GM10248 (cell line): ENCODE measurements at regions of chr1 and their contacts with region 1.

Region 1: DNA sequence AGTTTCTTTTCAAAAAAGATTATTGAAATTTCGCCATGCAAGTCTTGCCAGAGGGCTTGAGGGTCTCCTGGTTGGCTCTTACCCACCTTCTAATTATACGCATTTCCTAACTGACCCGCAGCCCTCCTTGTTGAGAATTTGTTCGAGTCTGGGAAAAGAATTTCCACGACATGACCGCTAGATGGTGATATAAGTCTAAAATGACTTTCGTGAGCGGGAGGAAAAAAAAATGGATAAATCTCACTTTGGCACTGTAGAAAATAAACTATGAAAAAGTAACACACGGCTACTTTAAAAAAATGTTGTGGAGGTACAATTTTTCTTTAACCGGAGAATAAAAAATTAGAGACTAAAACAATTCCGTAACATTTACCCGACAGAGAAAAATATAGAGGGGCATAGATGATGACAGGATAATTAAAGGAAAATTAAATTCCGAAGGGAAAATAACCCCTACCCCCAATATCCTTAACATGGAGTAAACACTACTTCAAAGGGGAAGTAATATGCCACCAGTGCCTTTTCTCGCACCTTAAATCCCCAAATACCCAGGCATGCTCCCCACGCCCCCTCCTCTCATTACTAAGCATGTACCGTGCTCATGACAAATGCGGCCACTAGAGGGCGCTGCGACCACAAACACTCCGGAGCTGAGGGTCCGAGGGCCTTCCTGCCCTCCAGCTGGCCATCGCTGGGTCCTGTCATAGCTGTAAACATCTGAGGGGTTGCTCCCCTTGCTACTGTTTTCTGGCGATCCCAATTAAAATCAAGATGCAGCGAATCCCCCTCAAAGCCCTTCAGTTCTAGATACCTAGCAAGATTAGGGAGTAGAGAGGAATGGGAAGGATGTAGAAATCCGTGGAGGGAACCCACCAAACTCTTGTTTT is 266.9 kb downstream of the ASTN1 start:
- DNase-seq: peak; percentile 52
- CTCF ChIP-seq: peak; percentile 71

Region 2: GRCh38 chr1:176880954-176881595 is 16.5 kb before region 1 on chr1:
- CTCF ChIA-PET with region 1: interaction called, 11 read pairs
- POLR2A ChIA-PET with region 1: no interaction called
- DNase-seq: peak; percentile 63
- CTCF ChIP-seq: peak; percentile 80

Region 3: DNA sequence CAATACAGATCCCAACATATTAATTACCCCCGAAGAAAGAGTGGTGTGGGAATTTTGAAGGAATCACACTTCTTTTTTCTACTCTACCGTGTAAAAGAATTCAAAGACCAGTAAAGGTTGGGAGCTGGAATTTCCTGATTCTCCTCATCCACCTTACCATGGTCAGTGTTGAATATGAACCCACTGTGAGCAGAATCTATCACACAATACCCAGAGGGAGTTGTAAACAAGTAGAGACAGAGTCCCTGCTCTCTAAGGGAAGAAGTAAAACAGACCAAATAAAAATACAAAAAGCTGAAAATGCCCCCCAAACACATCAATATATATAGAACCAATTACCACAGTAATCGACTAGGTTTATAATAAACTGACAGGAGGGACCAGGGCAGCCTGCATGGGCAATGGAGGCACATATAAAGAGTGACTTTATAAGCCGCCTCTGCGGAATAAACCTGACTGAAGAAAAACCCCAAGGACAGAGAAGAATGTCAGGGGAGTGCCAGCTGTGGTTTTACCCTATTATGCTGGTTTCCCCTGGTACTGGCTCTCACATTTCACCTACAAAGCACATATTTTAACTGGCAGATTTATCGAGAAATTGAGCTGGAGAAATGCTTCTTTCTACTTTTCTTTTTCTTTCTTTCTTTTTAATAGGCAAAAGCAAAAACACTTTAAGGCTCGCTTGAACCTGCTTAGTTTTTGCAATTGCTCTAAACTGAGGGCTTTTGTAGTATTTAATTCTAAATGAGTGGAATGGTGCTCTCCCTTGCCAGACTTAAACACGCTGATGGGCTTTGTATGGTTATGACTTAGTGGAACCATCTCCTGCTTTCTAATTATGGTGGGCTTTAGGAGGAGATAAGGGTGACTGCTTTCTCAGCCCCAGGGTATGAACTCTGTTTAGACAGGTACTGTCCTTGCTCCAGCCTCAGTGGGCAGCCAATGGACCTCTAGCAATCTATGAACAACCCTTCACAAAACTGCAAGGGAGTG is 22.1 kb after region 1 on chr1:
- CTCF ChIA-PET with region 1: interaction called, 10 read pairs
- POLR2A ChIA-PET with region 1: no interaction called
- DNase-seq: no peak
- CTCF ChIP-seq: no peak

Region 4: DNA sequence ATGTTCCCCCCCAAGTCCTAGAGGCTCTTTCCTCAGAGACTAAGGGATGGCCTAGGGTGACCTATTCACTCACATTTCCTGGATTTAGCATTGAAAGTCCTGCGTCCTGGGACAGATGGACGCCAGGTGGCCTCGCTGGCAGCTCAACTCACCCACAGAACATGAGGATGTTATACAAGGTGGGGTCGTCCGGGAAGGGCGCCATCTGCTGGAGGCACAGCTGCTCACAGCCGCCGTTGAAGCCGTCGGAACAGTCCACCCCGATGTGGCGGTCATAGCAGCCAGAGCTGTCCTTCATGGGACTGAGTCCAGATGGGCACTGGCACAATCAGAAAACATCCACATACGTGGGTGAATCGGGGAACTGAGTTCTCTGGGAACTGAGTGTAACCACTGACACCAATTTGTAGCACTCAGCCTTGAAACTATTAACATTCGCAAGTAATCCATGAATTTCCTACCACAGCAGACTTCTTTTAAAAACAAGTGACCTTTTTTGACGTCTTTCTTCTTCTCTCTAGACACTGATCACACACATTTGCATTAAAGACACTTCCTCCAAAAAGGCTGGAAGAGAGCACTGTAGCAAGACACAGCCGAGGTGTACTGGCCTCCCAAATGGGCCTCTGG is 51.6 kb after region 1 on chr1:
- CTCF ChIA-PET with region 1: interaction called, 10 read pairs
- POLR2A ChIA-PET with region 1: no interaction called
- DNase-seq: peak; percentile 40
- CTCF ChIP-seq: peak; percentile 52

Region 5: DNA sequence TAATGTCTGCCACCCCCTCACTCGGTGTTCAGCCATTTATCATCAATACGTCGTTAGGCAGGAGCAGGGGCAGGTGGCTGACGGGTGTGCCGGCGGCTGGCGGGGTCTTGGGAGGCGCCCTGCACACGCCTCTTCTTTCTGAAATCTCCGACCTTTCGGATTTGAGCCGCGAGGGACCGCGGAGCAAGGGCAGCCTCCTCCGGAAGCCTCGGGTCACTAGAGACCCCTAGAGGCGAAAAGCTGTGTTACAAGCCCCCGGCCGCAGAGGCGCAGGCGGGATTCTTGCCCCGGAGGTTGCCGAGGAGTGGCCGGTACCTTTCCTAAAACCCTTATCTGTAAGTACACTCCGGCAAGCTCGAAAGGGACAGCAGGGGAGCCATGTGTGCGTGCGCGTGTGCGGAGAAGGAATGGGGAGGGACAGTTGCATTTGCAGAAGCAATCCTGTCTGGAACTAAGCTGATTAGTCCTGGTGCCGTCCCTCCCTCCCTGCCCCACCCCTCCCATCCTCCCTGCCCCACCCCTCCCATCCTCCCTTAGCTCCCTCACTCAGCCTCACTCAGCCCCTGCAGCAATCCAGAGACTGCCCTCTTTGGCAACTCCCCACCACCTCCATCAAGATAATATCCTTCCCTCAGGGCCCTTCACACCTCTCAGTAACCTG is 284.2 kb after region 1 on chr1:
- CTCF ChIA-PET with region 1: interaction called, 11 read pairs
- POLR2A ChIA-PET with region 1: no interaction called
- DNase-seq: peak; percentile 81
- CTCF ChIP-seq: peak; percentile 63

Region 6: DNA sequence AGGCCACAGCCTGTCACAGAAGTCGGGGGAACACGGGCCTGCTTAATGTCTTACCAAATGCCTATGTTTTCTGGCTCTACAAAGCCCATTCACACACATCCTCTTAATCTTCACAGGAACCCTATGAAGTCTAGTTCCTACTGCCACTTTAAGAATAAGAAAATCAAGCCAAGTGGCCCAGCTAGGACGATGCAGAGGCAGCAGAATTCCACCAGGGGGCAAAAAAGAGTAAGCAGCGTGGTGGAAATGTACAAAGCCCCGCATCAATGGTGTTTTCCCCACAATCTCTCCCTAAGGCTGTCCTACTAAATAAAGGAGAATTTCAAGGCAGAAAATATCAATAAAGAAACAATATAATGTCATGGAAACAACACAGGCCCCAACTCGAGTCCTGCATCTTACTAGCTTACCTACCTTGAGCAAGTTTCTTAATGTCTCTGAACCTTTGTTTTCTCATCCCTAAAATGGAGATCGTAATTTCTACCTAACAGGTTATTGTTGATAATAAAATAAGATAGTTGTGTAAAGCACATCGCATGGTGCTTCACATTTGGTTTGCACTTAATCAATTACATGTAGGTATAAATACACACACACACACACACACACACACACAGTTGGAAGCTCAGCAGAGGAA is 1050.9 kb after region 1 on chr1:
- CTCF ChIA-PET with region 1: interaction called, 30 read pairs
- POLR2A ChIA-PET with region 1: no interaction called
- DNase-seq: peak; percentile 52
- CTCF ChIP-seq: peak; percentile 80